ENCODE measurements at regions of chr7 and their contacts with region 1.

Region 1: GRCh38 chr7:141785706-141786552 is 4.1 kb upstream of the TAS2R5 start:
- DNase-seq: peak; percentile 39 to 64
- ATAC-seq: peak; percentile 77 to 89; a peak in 5 of 6 replicates
- H3K4me3 ChIP-seq: no peak overlapping the region
- H3K27ac ChIP-seq: no peak overlapping the region
- H3K4me1 ChIP-seq: no peaks in the 10 kb centered on the region
- CTCF ChIP-seq: peak; percentile 78
- EP300 ChIP-seq: no peak
- POLR2A ChIP-seq: no peak
- RAD21 ChIP-seq: peak; percentile 57 to 71

Region 2: GRCh38 chr7:141654551-141654950 is 131.4 kb before region 1 on chr7:
- CTCF ChIA-PET with region 1: interaction called, 11 read pairs
- POLR2A ChIA-PET with region 1: no interaction called
- DNase-seq: peak; percentile 67 to 76
- ATAC-seq: peak; percentile 78 to 86
- H3K4me3 ChIP-seq: no peak overlapping the region
- H3K27ac ChIP-seq: no peak overlapping the region
- H3K4me1 ChIP-seq: peaks cover 4% of the 10 kb centered on the region; the same call in 2 of the 3 replicates
- CTCF ChIP-seq: peak; percentile 75
- EP300 ChIP-seq: no peak
- POLR2A ChIP-seq: no peak
- RAD21 ChIP-seq: peak; percentile 78

Region 3: DNA sequence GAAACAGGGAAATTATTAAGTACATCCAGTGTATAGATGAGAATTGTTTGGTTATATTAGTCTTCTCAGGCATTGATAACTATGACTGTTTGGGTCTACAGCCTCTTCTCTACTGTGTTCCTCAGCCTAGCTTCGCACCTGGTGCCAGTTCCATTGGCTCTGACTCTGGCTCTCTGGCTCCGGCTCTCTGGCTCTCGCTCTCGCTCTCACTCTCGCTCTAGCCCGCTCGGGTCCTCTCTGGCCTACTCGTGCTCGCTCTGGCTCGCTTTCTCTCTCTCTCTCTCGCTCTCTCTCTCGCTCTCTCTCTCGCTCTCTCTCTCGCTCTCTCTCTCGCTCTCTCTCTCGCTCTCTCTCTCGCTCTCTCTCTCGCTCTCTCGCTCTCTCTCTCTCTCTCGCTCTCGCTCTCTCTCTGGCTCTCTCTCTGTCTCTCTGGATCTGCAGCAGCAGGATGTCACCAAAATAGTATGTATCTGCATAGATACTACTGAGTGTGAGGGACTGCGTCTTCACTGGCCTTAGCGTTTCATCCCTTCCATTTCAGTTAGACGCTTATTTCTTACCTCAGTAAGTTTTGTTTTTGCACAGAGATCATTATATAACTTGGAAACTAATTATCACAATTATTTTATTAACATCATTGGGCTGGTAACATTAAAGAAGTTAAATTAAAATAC is 54.3 kb before region 1 on chr7:
- CTCF ChIA-PET with region 1: no interaction called
- POLR2A ChIA-PET with region 1: no interaction called
- DNase-seq: no peak
- ATAC-seq: no peak
- H3K4me3 ChIP-seq: no peak overlapping the region
- H3K27ac ChIP-seq: no peak overlapping the region
- H3K4me1 ChIP-seq: peaks cover 3% of the 10 kb centered on the region; the same call in 2 of the 3 replicates
- CTCF ChIP-seq: no peak
- EP300 ChIP-seq: no peak
- POLR2A ChIP-seq: no peak
- RAD21 ChIP-seq: no peak

Region 4: DNA sequence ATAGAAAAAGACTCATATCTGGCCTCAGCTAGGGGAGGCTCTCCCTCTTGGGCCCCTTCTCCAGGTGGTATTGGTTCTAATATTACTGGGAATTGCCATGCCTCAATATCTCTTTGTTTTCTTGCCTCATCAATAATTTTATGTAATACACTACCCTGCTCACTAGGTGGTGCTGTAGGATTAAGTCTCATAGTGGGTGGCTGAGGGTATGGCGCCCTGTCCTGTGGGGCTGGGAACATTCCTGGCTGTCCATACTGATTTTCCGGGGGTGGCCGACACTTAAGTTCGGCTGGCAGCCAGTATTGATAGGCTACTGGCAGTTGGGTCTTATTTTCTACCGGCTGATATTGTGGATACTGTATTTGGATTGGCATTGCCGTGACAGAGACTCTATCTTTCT is 31.0 kb before region 1 on chr7:
- CTCF ChIA-PET with region 1: interaction called, 14 read pairs
- POLR2A ChIA-PET with region 1: no interaction called
- DNase-seq: peak in 1 of 2 experiments; percentile 33
- ATAC-seq: peak in 1 of 2 experiments; percentile 42; a peak in 3 of 6 replicates
- H3K4me3 ChIP-seq: no peak overlapping the region
- H3K27ac ChIP-seq: no peak overlapping the region
- H3K4me1 ChIP-seq: no peaks in the 10 kb centered on the region
- CTCF ChIP-seq: peak; percentile 15; the same call in 1 of the 3 replicates
- EP300 ChIP-seq: no peak
- POLR2A ChIP-seq: no peak
- RAD21 ChIP-seq: peak in 1 of 2 experiments; percentile 18; a peak in 1 of 5 replicates

Region 5: GRCh38 chr7:141763797-141764196 is 22.1 kb before region 1 on chr7 and contains the start of gene TAS2R3:
- CTCF ChIA-PET with region 1: interaction called, 14 read pairs
- POLR2A ChIA-PET with region 1: no interaction called
- DNase-seq: no peak
- ATAC-seq: no peak
- H3K4me3 ChIP-seq: no peak within 1 kb of the TSS
- H3K27ac ChIP-seq: no peak within 1 kb of the TSS
- H3K4me1 ChIP-seq: no peaks in the 10 kb centered on the region
- CTCF ChIP-seq: no peak
- EP300 ChIP-seq: no peak
- POLR2A ChIP-seq: no peak
- RAD21 ChIP-seq: no peak
- polyA plus RNA-seq, gene TAS2R3: 0.36 and 1.4 TPM in 2 replicates

Region 6: DNA sequence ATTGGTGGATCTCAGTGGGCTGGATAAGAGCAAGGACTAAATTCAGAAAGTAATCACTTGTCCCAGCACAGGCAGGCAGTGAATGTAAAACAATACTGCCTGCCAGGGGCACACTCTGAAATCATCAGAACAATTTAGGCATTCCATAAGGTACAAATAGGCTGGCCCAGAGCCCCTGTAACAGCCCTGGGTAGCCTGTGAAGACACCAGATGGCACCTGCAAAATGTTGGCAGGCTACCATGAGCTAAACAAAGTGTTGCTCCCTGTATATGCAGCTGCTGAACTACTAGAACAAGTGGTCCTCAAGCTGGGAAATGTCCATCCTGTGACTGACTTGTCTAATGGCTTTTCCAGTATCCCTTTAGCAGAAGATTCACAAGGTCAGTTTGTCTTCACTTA is 58.3 kb after region 1 on chr7:
- CTCF ChIA-PET with region 1: no interaction called
- POLR2A ChIA-PET with region 1: no interaction called
- DNase-seq: no peak
- ATAC-seq: no peak
- H3K4me3 ChIP-seq: no peak overlapping the region
- H3K27ac ChIP-seq: no peak overlapping the region
- H3K4me1 ChIP-seq: no peaks in the 10 kb centered on the region
- CTCF ChIP-seq: no peak
- EP300 ChIP-seq: no peak
- POLR2A ChIP-seq: no peak
- RAD21 ChIP-seq: no peak